ENCODE measurements at regions of chr10 and their contacts with region 1.

Region 1: GRCh38 chr10:123582084-123582989 is 83.8 kb upstream of the GPR26 start:
- DNase-seq: peak; percentile 85 to 93
- ATAC-seq: peak; percentile 73
- H3K4me3 ChIP-seq: no peak overlapping the region
- H3K27ac ChIP-seq: no peak overlapping the region
- H3K4me1 ChIP-seq: no peaks in the 10 kb centered on the region
- H3K27me3 ChIP-seq: no peaks in the 10 kb centered on the region

Region 2: DNA sequence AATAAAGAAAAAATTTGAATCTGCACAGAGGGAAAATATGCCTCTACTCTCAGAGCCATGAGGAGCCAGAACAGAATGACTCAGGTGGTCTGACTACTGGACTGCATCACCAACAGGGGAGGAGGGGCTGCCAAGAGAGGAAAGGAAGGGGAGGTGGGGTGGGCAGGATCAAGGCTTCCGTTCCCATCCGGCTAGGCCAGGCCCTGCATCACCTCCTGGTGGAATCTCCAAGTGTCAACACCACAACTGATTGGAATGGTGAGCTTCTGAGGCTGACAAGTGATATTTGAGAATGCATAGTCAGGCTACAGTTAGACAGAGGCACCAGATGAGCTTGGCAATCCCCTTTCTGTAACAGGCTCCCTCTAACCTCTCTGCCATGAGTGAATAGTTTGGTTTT is 73.4 kb after region 1 on chr10:
- intact Hi-C with region 1: no loop called
- DNase-seq: no peak
- ATAC-seq: no peak
- H3K4me3 ChIP-seq: no peak overlapping the region
- H3K27ac ChIP-seq: no peak overlapping the region
- H3K4me1 ChIP-seq: no peaks in the 10 kb centered on the region
- H3K27me3 ChIP-seq: no peaks in the 10 kb centered on the region

Region 3: DNA sequence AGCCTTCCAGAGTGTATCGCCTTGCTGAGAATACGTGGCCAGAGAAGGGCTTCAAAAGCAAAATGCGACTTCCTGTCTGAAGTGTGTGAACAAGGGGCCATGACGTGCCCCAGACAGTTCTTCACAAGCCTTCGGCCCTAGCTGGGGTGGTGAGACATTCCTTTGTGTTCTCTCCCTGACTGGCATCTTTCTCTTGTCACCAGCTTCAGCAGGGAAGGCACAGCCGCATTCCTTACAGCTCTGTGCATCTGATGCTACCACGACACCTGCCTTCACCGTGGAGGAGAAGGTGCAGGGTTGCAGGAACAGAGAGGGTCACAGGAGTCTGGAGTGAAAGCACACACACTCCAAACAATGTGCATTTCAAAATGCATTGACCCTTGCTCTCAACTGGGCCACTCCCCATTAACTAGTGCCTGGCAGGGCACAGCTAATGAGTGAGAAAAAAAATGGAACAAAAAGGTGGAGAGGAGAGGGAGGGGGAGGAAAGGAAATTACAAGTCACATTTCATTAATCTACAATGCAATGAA is 177.2 kb after region 1 on chr10:
- intact Hi-C with region 1: loop called (anchors 10 kb)
- DNase-seq: no peak
- ATAC-seq: no peak
- H3K4me3 ChIP-seq: no peak overlapping the region
- H3K27ac ChIP-seq: no peak overlapping the region
- H3K4me1 ChIP-seq: no peaks in the 10 kb centered on the region
- H3K27me3 ChIP-seq: no peaks in the 10 kb centered on the region

Region 4: DNA sequence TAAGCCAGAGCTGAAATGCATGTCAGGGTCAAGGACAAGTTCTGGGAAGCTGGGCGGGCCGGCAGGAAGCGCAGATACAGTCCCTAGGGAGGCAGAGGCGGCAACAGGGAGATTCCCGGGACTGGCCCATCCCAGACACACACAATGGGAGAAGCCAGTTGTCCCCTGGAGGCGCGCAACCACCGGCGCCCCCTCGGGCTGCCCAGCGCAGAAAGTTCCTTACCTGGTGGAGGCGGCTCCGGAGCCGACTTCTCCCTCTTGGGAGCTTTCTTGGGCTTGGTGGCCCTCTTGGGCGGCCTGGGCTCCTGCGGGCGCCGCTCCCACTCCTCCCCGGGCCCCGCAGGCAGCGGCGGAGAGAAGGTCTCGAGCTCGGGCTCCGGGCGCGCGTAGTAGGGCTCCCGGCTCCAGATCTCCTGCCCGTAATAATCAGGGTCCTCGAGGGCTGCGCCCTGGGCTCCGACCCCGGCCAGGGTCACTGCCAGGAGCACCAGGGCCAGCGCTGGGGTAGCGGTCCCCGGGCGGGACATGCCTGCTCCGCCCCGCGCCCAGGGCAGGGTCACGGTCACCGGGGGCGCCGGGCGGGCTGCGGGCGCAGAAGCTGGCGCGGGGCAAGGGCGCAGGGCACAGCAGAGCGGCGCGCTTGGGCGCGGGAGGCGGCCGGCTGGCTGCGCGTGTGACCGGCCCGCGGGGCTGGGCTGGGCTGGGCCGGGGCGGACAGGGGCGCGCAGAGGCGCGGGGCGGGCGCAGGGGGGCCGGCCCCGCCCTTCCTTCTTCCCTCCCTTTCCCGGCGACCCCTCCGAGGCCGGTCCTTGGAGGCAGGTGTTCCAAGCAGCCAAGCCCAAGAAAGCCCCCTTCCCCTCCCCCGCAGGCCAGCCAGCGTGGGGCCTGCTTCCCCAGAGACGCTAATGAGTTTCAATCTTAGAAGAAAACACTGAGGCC is 309.1 kb after region 1 on chr10 and contains the start of gene CPXM2:
- intact Hi-C with region 1: loop called (anchors 2 to 10 kb)
- DNase-seq: peak; percentile 71 to 81
- ATAC-seq: peak; percentile 60
- H3K4me3 ChIP-seq: peak within 1 kb of the TSS; percentile 88 to 91
- H3K27ac ChIP-seq: peak within 1 kb of the TSS; percentile 79 to 94
- H3K4me1 ChIP-seq: no peaks in the 10 kb centered on the region
- H3K27me3 ChIP-seq: no peaks in the 10 kb centered on the region
- total RNA-seq, gene CPXM2: 116 to 169 TPM

Region 5: GRCh38 chr10:123897146-123897545 is 314.8 kb after region 1 on chr10:
- intact Hi-C with region 1: loop called in 1 of 2 experiments (anchors 10 kb)
- DNase-seq: no peak
- ATAC-seq: no peak
- H3K4me3 ChIP-seq: no peak overlapping the region
- H3K27ac ChIP-seq: no peak overlapping the region
- H3K4me1 ChIP-seq: no peaks in the 10 kb centered on the region
- H3K27me3 ChIP-seq: no peaks in the 10 kb centered on the region

Region 6: DNA sequence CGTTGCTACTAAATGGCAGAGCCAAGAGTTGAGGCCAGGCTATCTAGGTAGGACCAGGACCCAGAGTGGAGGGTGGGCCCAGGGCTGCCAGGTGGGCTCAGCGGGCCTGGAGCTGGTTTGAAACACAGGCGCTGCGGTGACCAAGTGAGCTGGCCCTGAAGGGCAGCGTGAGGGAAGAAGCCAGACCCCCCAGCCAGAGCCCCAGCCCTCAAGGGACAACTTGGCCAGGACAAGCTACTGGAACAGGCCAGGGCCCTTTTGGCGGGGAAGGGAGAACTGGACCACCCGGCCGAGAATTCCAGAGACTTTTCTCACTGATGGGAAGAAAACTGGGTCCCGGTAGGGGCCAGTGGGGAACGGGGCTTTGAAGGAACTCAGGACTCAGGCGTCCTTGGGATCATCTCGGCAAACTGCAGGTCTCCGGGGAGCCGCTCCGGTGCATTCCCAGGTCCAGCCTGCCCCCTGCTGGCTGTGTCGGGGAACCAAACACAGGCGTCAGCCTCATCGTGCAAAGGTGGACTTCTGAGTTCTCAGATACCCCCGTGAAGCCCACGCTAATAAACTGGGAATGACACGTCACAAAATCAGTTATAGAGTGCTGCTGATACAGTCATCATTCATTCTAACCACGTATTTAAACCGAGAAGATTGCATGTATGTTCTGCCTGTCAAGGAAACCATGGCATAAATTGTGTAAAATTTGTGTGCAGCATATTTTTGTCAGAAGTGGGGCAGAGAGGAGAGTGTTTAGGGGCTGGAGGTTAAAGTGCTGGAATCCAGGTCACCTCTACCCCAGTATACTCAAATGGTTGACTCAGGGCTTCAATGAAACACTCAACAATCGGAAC is 385.3 kb after region 1 on chr10:
- intact Hi-C with region 1: loop called (anchors 1 to 2 kb)
- DNase-seq: peak; percentile 82 to 93
- ATAC-seq: peak; percentile 89
- H3K4me3 ChIP-seq: no peak overlapping the region
- H3K27ac ChIP-seq: no peak overlapping the region
- H3K4me1 ChIP-seq: no peaks in the 10 kb centered on the region
- H3K27me3 ChIP-seq: no peaks in the 10 kb centered on the region

Region 7: GRCh38 chr10:124388823-124389612 is 806.7 kb after region 1 on chr10:
- intact Hi-C with region 1: loop called (anchors 5 to 10 kb)
- DNase-seq: peak; percentile 92 to 98
- ATAC-seq: peak; percentile 95
- H3K4me3 ChIP-seq: no peak overlapping the region
- H3K27ac ChIP-seq: no peak overlapping the region
- H3K4me1 ChIP-seq: peaks cover 0 to 3% of the 10 kb centered on the region in 2 donors
- H3K27me3 ChIP-seq: no peaks in the 10 kb centered on the region